PC-3 (cell line): ENCODE measurements at regions of chr3 and their contacts with region 1.

Region 1: GRCh38 chr3:157618075-157618760 is 115.0 kb upstream of the VEPH1 start:
- DNase-seq: peak; percentile 89
- ATAC-seq: peak; percentile 80
- H3K4me3 ChIP-seq: no peak overlapping the region
- H3K27ac ChIP-seq: no peak overlapping the region
- H3K4me1 ChIP-seq: peaks cover 5% of the 10 kb centered on the region; the same call in 1 of the 2 replicates
- H3K27me3 ChIP-seq: no peaks in the 10 kb centered on the region
- CTCF ChIP-seq: peak; percentile 77

Region 2: DNA sequence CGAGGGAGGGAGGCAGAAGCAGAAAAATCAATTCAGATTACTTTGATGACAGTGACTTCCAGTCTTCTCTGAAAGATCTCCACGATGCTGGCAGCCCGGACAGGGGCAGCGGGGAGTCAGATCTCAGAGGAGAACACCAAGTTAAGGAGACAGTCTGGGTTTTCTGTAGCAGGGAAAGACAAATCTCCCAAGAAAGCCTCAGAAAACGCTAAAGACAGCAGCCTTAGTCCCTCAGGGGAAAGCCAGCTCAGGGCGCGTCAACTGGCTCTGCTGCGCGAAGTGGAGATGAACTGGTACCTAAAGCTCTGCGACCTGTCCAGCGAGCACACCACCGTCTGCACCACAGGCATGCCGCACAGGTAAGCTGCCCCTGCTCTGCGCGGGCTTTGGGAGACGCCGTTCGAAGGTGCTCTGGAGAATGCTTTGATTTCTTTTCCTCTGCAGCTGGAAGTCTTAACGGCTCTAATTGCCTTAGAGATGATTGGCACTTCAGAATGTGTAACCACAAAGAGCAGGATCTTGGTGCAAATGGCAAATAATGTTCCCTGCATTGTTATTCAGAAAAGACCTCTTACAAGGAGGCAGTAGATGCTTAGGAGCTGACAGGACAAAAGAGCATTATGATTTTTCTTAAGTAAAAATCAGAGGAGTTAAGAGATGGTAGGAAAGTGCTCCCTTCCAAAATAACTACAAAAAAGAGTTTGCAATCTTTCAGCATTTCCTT is 1497.5 kb before region 1 on chr3 and contains the start of gene KCNAB1:
- CTCF ChIA-PET with region 1: no interaction called
- POLR2A ChIA-PET with region 1: no interaction called
- intact Hi-C with region 1: no loop called
- DNase-seq: no peak
- ATAC-seq: no peak
- H3K4me3 ChIP-seq: no peak within 1 kb of the TSS
- H3K27ac ChIP-seq: no peak within 1 kb of the TSS
- H3K4me1 ChIP-seq: no peaks in the 10 kb centered on the region
- H3K27me3 ChIP-seq: peaks cover 44% of the 10 kb centered on the region
- CTCF ChIP-seq: no peak
- total RNA-seq, gene KCNAB1: not detected in 2 replicates

Region 3: DNA sequence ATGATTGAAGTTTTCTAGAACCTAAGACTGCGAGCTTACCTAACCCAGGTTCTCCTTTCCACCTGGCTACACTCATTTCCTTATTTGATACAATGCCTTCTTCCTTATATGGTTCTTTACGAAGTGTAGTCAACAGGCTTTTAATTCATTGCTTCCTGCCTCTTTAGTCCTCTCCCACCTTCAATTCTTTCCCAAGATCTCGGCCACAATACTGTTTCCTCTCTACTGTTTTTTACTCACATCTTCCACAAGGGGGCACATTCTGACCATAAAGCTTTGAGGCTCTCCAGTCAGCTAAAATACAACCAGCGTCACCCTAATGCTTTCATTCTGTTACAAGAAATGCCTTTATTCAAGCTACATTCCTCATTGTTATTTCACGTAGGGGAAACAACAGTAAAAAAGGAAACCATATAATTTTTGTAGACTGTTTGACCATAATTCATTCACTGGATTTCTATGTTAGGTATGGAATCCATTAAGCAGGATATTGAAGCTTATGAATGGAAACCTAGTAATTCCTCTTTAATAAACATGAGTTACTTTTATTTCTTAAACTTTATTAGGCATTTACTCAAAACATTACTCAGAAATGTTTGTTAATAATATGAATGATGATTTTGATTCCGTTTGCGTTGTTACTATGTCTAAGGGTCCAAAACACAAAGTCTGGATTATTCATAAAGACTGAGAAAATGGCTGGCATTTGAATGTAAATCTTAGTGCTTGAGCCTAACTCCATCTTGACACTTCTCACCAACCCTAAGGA is 85.5 kb before region 1 on chr3:
- CTCF ChIA-PET with region 1: interaction called, 13 read pairs
- POLR2A ChIA-PET with region 1: interaction called, 16 read pairs
- intact Hi-C with region 1: loop called (anchors 1 kb)
- DNase-seq: peak; percentile 94
- ATAC-seq: peak; percentile 75
- H3K4me3 ChIP-seq: peak overlapping the region; percentile 52
- H3K27ac ChIP-seq: peak overlapping the region; percentile 68
- H3K4me1 ChIP-seq: peaks cover 47% of the 10 kb centered on the region
- H3K27me3 ChIP-seq: no peaks in the 10 kb centered on the region
- CTCF ChIP-seq: peak; percentile 96

Region 4: DNA sequence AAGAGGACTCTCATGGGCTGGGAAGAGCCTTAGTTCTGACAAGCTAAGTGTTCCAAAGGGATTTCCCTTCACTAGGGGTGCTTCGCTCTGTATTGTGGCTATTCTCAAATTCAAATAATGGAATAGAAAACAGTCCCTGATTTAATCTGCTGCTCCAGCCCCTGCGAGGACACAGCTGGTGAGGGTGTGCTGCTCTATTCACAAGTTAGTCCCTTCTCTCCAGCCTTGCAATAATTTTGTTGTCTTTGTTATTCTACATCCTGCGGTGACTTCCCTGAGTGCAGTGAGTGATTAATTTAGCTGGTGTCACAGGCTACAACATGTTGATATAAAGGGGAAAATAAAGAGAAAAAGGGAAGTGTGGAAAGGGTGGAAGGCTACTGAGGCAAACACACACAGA is 65.4 kb after region 1 on chr3:
- CTCF ChIA-PET with region 1: interaction called, 14 read pairs
- POLR2A ChIA-PET with region 1: no interaction called
- intact Hi-C with region 1: no loop called
- DNase-seq: no peak
- ATAC-seq: no peak
- H3K4me3 ChIP-seq: no peak overlapping the region
- H3K27ac ChIP-seq: no peak overlapping the region
- H3K4me1 ChIP-seq: no peaks in the 10 kb centered on the region
- H3K27me3 ChIP-seq: no peaks in the 10 kb centered on the region
- CTCF ChIP-seq: no peak

Region 5: GRCh38 chr3:157865352-157866000 is 247.3 kb after region 1 on chr3:
- CTCF ChIA-PET with region 1: interaction called, 4 read pairs
- POLR2A ChIA-PET with region 1: no interaction called
- intact Hi-C with region 1: loop called (anchors 5 kb)
- DNase-seq: peak; percentile 60
- ATAC-seq: peak; percentile 73
- H3K4me3 ChIP-seq: no peak overlapping the region
- H3K27ac ChIP-seq: no peak overlapping the region
- H3K4me1 ChIP-seq: no peaks in the 10 kb centered on the region
- H3K27me3 ChIP-seq: no peaks in the 10 kb centered on the region
- CTCF ChIP-seq: peak; percentile 97

Region 6: DNA sequence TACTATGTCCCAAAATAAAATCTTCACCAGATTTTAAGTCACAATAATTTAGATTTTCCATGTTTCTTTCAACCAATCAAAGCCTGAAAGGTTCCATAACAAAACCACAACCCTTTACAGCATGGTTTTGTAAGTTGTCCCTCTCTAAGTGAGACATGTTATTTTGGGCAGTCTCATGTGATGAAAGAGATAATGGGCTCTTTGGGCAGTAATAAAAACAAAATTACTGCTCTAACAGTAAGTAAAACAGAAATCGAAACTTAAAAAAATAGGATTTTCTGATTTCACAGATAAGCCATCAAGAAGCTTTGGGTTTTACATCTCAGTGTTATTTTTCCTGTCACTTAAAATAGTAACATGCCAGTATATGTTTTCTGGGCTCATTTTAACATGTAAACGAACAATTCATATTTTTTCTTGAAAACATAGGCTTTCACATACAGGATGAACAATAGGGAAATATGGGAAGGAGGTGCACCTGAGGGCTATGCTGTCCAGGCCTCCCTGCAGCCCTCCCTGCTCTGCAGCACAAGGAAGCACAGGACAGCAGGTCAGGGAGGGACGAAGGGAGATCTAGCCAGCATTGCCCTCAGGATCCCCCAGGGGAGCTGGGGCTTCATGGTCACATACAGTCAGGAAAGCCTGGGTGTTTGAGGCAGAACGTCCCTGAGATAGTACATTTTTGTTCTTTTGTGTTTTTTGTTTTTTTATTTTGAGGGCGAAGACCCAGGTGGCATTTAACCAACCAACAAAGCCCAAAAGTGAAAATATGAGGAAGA is 330.6 kb after region 1 on chr3:
- CTCF ChIA-PET with region 1: no interaction called
- POLR2A ChIA-PET with region 1: interaction called, 14 read pairs
- intact Hi-C with region 1: no loop called
- DNase-seq: no peak
- ATAC-seq: no peak
- H3K4me3 ChIP-seq: no peak overlapping the region
- H3K27ac ChIP-seq: no peak overlapping the region
- H3K4me1 ChIP-seq: no peaks in the 10 kb centered on the region
- H3K27me3 ChIP-seq: no peaks in the 10 kb centered on the region
- CTCF ChIP-seq: no peak

Region 7: GRCh38 chr3:158313338-158313927 is 695.2 kb after region 1 on chr3:
- CTCF ChIA-PET with region 1: no interaction called
- POLR2A ChIA-PET with region 1: no interaction called
- intact Hi-C with region 1: loop called (anchors 5 kb)
- DNase-seq: peak; percentile 56
- ATAC-seq: no peak
- H3K4me3 ChIP-seq: no peak overlapping the region
- H3K27ac ChIP-seq: no peak overlapping the region
- H3K4me1 ChIP-seq: no peaks in the 10 kb centered on the region
- H3K27me3 ChIP-seq: no peaks in the 10 kb centered on the region
- CTCF ChIP-seq: peak; percentile 64